MCF 10A (cell line): ENCODE measurements at regions of chr9 and their contacts with region 1.

Region 1: DNA sequence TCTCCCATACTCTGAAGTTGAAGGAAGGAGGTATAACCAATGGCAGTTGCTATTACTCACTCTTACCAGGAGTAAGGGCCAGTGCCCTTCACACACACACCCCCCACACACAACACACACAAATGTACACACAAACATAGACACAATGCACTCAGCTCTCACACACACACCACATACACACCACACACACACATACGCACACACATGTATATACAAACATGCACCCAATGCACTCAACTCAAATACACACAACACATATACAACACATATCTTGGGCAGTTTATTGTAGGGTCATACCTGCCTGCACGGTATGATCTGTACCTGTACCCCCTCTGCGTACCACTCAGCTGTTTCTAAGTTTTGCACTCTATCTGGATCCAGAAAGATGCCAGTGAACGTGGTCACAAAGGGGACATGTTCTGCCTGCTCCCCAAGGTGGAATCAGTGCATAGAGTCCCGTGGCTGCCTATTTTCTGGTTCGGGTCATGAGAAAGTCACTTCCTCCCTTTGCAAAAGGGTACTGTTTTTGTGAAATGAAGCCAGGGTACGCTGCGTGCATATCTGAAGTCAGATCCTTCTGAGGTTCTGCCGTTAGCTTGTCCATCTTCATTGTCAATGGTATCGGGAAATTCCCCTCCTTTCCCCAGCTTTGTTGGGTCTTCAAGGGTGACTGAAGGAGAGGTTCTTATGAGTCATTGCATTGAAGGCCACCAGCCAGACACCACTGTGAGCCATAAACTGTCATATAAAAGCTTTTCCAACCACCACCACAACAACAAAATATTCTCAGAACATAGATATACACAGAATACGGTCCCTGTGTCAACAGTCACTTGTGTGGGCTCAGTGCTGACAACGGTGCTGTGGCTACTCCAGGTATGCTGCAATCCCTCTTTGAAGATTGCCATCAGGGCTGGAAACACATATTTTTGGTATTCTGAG is 131.9 kb downstream of the UGCG start:
- DNase-seq: no peak
- H3K4me3 Mint-ChIP-seq: no peak overlapping the region
- H3K27ac Mint-ChIP-seq: peak overlapping the region; percentile 96
- H3K4me1 Mint-ChIP-seq: peaks cover 30% of the 10 kb centered on the region
- H3K27me3 Mint-ChIP-seq: no peaks in the 10 kb centered on the region
- CTCF ChIP-seq: no peak

Region 2: DNA sequence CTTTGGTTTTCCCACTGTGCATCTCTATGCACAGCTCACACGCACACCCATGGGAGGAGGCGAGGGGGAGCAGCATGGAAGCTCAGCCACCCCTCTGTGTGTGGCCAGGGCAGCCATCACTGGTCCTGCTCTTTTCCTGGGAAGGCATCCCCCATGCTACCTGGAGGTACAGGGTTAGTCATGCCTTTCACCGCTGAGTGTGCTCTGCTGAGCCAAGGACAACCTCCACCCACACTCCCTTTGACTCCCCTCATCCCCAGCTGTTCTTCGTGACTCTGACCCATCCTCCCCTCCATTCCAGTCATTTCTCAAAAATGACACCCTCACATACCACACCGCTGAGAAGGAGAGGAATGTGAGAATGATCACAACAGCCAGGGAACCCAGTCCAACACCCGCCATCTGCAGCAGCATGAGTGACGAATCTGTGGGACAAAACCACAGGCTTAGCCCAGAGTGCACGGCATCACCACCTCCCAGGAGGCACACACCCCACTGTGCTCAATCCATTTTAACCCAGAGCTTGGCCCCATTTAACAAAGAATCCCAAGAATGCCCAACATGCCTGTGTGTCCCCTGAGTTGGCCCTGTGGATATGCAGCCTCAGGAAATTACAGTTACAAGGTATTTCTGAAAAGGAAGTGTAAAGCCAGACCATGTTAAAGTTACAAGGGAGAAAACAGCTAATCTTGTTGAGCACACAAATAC is 13.1 kb after region 1 on chr9:
- CTCF ChIA-PET with region 1: no interaction called
- POLR2A ChIA-PET with region 1: interaction called, 15 read pairs
- intact Hi-C with region 1: no loop called
- DNase-seq: peak; percentile 95
- H3K4me3 Mint-ChIP-seq: peak overlapping the region; percentile 24
- H3K27ac Mint-ChIP-seq: peak overlapping the region; percentile 85
- H3K4me1 Mint-ChIP-seq: peaks cover 40% of the 10 kb centered on the region
- H3K27me3 Mint-ChIP-seq: no peaks in the 10 kb centered on the region
- CTCF ChIP-seq: no peak